Gastrocnemius medialis (tissue), 4 donors: ENCODE measurements at regions of chr7 and their contacts with region 1.

Region 1: DNA sequence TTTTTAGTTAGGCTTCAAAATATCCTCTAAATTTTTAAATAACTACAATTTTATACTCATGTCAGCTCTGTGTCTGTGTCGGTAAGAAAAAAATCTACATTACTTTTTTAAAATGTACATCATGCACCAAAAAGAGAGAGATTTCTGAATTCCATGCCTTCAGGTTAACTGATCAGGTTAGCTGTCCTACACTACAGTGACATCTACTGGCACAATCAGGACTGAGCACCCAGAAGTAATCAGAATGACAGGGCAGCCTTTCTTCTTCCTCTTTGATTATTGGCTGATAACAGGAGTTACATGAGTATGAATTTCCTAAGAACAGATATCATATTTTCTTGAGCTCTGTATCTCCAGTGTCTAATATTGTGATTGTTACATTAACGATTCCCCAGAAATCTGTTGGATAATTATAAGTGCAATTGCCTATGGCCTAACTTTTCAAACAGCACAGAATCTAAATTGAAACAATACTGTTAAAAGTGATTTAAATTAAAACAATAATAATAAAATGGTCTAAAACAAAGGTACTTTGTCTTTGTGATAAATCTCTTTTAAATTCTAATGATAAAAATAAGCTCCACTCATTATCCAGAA is 41.8 kb upstream of the HYCC1 start:
- DNase-seq: peak; percentile 9 to 24
- ATAC-seq: peak; percentile 88 to 90
- H3K4me3 ChIP-seq: no peak overlapping the region
- H3K27ac ChIP-seq: no peak overlapping the region
- H3K4me1 ChIP-seq: no peaks in the 10 kb centered on the region
- H3K27me3 ChIP-seq: no peaks in the 10 kb centered on the region
- CTCF ChIP-seq: peak; percentile 74 to 95 (median 91)
- POLR2A ChIP-seq: no peak

Region 2: DNA sequence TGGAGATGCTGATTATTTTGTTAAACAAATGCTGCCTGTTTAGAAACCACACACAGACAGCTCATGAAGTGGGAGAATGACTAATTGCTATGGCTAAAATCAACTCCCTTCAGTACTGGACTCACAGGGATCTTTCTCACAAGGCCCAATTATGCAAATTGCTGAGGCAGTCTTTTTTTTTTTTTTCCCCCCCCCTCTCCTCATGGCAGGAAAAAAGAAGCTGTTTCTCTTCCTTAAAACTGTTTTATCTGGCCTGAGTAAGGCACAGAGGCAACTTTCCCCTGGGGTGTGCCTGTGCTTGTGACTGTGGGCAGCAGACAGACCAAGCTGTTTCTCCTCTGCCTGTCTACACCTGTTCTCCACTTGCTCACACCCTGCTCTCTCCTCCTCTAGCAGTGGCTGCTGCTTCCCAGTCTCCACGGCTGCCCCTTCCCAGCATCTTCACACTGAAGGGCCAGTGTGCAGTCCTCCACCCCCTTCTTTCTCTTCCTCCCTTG is 490.3 kb before region 1 on chr7:
- in situ Hi-C with region 1: loop called in 2 of 4 experiments (anchors 5 kb)
- intact Hi-C with region 1: loop called (anchors 1 kb)
- DNase-seq: no peak
- ATAC-seq: no peak
- H3K4me3 ChIP-seq: no peak overlapping the region
- H3K27ac ChIP-seq: peak overlapping the region in 3 of 4 donors; percentile 16 to 47 (median 26)
- H3K4me1 ChIP-seq: peaks cover 29 to 38% of the 10 kb centered on the region in 2 donors
- H3K27me3 ChIP-seq: no peaks in the 10 kb centered on the region
- CTCF ChIP-seq: no peak
- POLR2A ChIP-seq: no peak

Region 3: GRCh38 chr7:22726345-22727185 is 329.1 kb before region 1 on chr7:
- in situ Hi-C with region 1: loop called in 3 of 4 experiments (anchors 10 to 25 kb)
- intact Hi-C with region 1: loop called (anchors 1 kb)
- DNase-seq: peak; percentile 45 to 66
- ATAC-seq: peak; percentile 86
- H3K4me3 ChIP-seq: peak overlapping the region; percentile 35 to 69 (median 40)
- H3K27ac ChIP-seq: peak overlapping the region; percentile 29 to 71 (median 46)
- H3K4me1 ChIP-seq: peaks cover 49 to 55% of the 10 kb centered on the region in 2 donors
- H3K27me3 ChIP-seq: no peaks in the 10 kb centered on the region
- CTCF ChIP-seq: peak; percentile 34 to 59 (median 59)
- POLR2A ChIP-seq: no peak

Region 4: DNA sequence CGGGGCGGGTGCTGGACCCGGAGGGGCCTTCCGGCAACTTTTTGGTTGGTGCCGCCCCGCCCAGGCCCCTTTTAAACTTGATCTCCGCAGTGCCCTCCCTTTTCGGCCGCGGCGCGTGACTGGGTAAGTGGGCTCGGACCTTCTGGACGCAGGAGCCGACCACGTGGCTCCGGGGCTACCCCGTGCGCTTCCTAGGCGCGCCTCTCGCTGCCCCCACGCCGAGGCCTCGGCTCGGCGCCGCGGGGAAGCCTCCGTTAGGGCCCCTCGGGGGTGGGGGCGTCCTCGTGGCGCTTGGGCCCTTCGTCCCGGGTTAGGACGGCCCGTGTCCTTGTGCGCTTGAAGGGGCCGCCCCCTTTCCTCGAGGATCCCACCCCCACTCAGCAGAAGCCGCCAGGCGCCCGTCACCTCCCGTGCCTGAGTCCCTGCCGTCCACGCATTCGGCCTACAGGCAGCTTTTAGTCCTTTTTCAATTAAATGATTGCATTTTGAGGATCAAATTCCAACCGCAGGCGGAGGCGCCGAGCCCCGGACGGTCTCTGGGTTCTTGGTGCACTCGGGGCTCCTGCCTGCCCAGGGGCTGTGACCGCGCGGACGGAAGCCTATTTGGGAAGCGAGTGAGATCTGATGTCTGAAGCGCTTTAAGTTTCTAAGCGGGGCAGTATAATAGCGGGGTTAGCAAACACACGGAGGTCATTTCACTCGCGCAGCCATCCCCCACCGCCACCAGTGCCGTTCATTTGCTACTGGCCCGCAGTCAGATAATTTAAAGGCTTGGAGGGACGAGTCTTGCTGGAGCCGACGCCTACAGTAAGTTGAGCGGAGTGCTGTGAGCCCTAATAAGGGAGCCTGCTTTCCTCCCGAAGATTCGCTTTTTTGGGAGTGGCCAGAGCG is 201.3 kb before region 1 on chr7:
- in situ Hi-C with region 1: no loop called
- intact Hi-C with region 1: loop called (anchors 10 kb)
- DNase-seq: peak; percentile 90 to 96
- ATAC-seq: peak; percentile 64 to 68
- H3K4me3 ChIP-seq: peak overlapping the region; percentile 71 to 86 (median 80)
- H3K27ac ChIP-seq: peak overlapping the region; percentile 94 to 99 (median 98)
- H3K4me1 ChIP-seq: peaks cover 36 to 46% of the 10 kb centered on the region in 2 donors
- H3K27me3 ChIP-seq: no peaks in the 10 kb centered on the region
- CTCF ChIP-seq: peak in 3 of 5 experiments; percentile 4 to 79 (median 70)
- POLR2A ChIP-seq: peak; percentile 87 to 90

Region 5: GRCh38 chr7:22980422-22980821 is 75.3 kb before region 1 on chr7:
- in situ Hi-C with region 1: no loop called
- intact Hi-C with region 1: loop called (anchors 10 kb)
- DNase-seq: no peak
- ATAC-seq: peak; percentile 32 to 61
- H3K4me3 ChIP-seq: no peak overlapping the region
- H3K27ac ChIP-seq: peak overlapping the region in 1 of 4 donors; percentile 30
- H3K4me1 ChIP-seq: no peaks in the 10 kb centered on the region
- H3K27me3 ChIP-seq: no peaks in the 10 kb centered on the region
- CTCF ChIP-seq: no peak
- POLR2A ChIP-seq: no peak

Region 6: GRCh38 chr7:23022258-23022769 is 33.4 kb before region 1 on chr7:
- in situ Hi-C with region 1: no loop called
- intact Hi-C with region 1: loop called (anchors 2 kb)
- DNase-seq: no peak
- ATAC-seq: no peak
- H3K4me3 ChIP-seq: no peak overlapping the region
- H3K27ac ChIP-seq: no peak overlapping the region
- H3K4me1 ChIP-seq: peaks cover 2 to 20% of the 10 kb centered on the region in 2 donors
- H3K27me3 ChIP-seq: no peaks in the 10 kb centered on the region
- CTCF ChIP-seq: no peak
- POLR2A ChIP-seq: no peak

Region 7: GRCh38 chr7:23157679-23158078 is 102.0 kb after region 1 on chr7:
- in situ Hi-C with region 1: no loop called
- intact Hi-C with region 1: no loop called
- DNase-seq: no peak
- ATAC-seq: no peak
- H3K4me3 ChIP-seq: no peak overlapping the region
- H3K27ac ChIP-seq: no peak overlapping the region
- H3K4me1 ChIP-seq: peaks cover 0 to 5% of the 10 kb centered on the region in 2 donors
- H3K27me3 ChIP-seq: no peaks in the 10 kb centered on the region
- CTCF ChIP-seq: no peak
- POLR2A ChIP-seq: no peak